Activated naive CD4-positive, alpha-beta T cell treated with anti-CD3 and anti-CD28 coated beads, Interleukin-2, amount 10 ng/mL, durations not matched to agents 7 days and 5 days (primary cell): ENCODE measurements at regions of chr1 and their contacts with region 1.

Region 1: GRCh38 chr1:67332653-67333529 is 25.2 kb downstream of the IL12RB2 start:
- DNase-seq: peak; percentile 43
- H3K4me3 Mint-ChIP-seq: peak overlapping the region; percentile 21
- H3K27ac Mint-ChIP-seq: peak overlapping the region; percentile 89
- H3K4me1 Mint-ChIP-seq: peaks cover 75% of the 10 kb centered on the region
- H3K27me3 Mint-ChIP-seq: no peaks in the 10 kb centered on the region

Region 2: DNA sequence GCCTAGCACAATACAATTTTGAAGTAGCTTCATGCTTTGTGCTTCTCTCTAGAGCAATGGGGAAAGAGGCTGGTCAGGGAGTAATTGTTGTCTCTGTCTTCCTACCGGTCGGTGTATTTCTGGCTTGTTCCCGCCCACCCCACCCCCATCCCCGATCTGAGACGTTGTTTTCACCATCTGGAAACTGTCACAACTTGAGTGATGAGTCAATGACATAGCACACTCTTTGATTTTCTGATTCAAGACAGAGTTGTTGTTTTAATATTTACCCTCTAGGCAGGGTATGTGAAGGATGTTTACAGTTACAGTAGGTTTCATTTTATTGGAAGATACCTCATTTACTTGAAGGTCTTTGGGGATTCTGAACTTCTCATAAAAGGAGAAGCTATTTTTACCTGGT is 18.2 kb before region 1 on chr1:
- CTCF ChIA-PET with region 1: interaction called, 14 read pairs
- DNase-seq: peak; percentile 38
- H3K4me3 Mint-ChIP-seq: peak overlapping the region; percentile 55
- H3K27ac Mint-ChIP-seq: peak overlapping the region; percentile 93
- H3K4me1 Mint-ChIP-seq: peaks cover 52% of the 10 kb centered on the region
- H3K27me3 Mint-ChIP-seq: no peaks in the 10 kb centered on the region

Region 3: DNA sequence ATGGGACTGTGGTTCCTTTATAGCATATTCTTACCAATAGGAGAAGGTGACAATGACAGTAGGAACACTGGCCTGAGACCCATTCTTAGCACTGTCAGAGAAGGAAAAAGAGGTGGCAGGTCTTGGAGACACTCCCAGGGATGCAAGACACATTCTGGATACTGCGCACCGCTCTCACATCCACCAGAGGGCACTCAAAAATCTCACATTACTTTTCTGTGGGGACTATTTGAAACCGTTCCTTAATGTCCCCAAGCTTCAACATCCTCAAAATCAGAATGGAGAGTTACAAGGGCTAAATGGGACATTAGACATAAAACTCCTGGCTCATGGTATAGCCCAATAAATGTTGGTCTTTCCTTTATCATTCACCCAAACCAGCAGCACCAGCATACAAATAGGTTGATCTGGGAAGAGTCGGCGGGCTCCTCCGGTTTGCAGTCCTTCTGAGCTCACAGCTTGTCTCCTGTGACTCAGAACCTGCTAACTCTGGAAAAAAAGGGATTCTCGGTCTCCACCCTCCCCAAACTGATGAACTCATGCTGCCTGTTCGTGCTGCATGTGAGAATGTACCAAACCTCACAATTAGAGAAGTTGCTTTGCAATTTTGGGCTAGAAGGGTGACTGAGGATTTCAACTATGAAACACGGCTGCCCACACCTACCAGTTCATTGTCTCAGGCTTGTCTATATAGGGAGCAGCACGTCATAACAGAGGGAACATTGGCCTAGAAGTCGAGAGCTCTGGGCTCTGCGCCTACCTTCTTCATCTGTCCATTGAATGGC is 15.0 kb after region 1 on chr1:
- CTCF ChIA-PET with region 1: interaction called, 11 read pairs
- DNase-seq: peak; percentile 44
- H3K4me3 Mint-ChIP-seq: no peak overlapping the region
- H3K27ac Mint-ChIP-seq: no peak overlapping the region
- H3K4me1 Mint-ChIP-seq: peaks cover 18% of the 10 kb centered on the region
- H3K27me3 Mint-ChIP-seq: no peaks in the 10 kb centered on the region